ENCODE measurements at regions of chr1 and their contacts with region 1.

Region 1: DNA sequence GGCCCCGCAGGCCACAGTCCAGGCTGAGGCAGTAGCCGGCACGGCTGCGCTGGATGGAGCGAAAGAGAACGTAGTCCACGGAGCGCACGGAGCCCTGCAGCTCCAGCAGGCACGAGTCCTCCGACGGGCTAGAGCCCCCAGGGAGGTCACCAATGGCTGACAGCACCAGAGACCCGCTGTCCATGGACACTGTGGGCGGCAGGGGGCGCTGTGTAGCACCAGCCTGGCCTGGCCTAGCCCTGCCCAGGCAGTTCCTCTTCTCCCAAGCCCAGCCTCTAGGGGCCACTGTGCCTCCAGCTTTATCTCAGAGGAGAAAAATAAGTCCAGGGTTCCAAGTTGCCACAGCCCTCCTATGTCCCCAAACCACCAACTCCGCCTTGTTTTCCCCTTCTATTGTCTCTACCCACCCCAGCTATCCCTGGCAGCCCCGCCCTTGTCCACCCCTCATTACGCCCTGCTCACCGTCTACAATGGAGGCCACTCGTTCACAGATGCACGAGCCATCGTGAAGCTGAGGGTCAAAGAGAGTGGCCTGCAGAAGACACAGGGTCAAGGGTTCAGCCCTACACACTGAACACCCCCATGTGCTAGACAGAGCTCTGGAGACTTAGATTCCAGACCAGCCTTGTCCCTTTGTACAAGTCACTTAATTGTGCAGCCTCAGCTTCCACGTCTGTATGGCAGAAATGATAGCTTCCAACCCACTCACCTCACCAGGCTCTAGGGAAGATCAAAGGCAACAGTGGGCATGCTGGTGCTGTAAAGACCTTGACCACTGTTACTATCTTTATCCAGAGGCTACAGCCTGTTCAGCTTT is 4.4 kb downstream of the ENTREP3 start:
- DNase-seq: peak in 1 of 2 experiments; percentile 100
- H3K4me3 ChIP-seq: peak overlapping the region; percentile 11 to 64 (median 58)
- H3K27ac ChIP-seq: no peak overlapping the region; the same call in 1 of the 2 replicates
- H3K4me1 ChIP-seq: peaks cover 0 to 20% (median 13%) of the 10 kb centered on the region in 4 experiments; a peak in 6 of 7 replicates
- H3K27me3 ChIP-seq: peaks cover 0 to 8% (median 4%) of the 10 kb centered on the region in 4 experiments; a peak in 2 of 7 replicates
- CTCF ChIP-seq: peak; percentile 100
- EP300 ChIP-seq: no peak
- POLR2A ChIP-seq: no peak
- RAD21 ChIP-seq: peak; percentile 88 to 90

Region 2: GRCh38 chr1:155208541-155209311 is 42.1 kb before region 1 on chr1 and contains the start of gene MTX1:
- CTCF ChIA-PET with region 1: interaction called, 37 read pairs
- POLR2A ChIA-PET with region 1: interaction called, 20 read pairs
- DNase-seq: peak in 1 of 2 experiments; percentile 90
- H3K4me3 ChIP-seq: peak within 1 kb of the TSS; percentile 86 to 95 (median 94)
- H3K27ac ChIP-seq: peak within 1 kb of the TSS; percentile 85
- H3K4me1 ChIP-seq: peaks cover 3 to 20% (median 12%) of the 10 kb centered on the region in 4 experiments
- H3K27me3 ChIP-seq: peaks cover 0 to 3% (median 0%) of the 10 kb centered on the region in 4 experiments; a peak in 2 of 7 replicates
- CTCF ChIP-seq: no peak
- EP300 ChIP-seq: peak in 1 of 2 experiments; percentile 86; a peak in 1 of 3 replicates
- POLR2A ChIP-seq: peak in 1 of 2 experiments; percentile 74; a peak in 2 of 3 replicates
- RAD21 ChIP-seq: no peak
- total RNA-seq, gene MTX1: 47.9 and 55.0 TPM in 2 replicates

Region 3: GRCh38 chr1:155261852-155262673 is 11.2 kb after region 1 on chr1 and contains the start of gene SCAMP3:
- CTCF ChIA-PET with region 1: interaction called, 63 read pairs
- POLR2A ChIA-PET with region 1: interaction called, 48 read pairs
- DNase-seq: peak; percentile 90 to 95
- H3K4me3 ChIP-seq: peak within 1 kb of the TSS; percentile 71 to 89 (median 76)
- H3K27ac ChIP-seq: peak within 1 kb of the TSS; percentile 27; the same call in 1 of the 2 replicates
- H3K4me1 ChIP-seq: peaks cover 0 to 8% (median 4%) of the 10 kb centered on the region in 4 experiments; a peak in 3 of 7 replicates
- H3K27me3 ChIP-seq: no peaks in the 10 kb centered on the region
- CTCF ChIP-seq: no peak
- EP300 ChIP-seq: no peak
- POLR2A ChIP-seq: peak; percentile 59 to 94
- RAD21 ChIP-seq: no peak
- total RNA-seq, gene SCAMP3: 48.9 and 50.0 TPM in 2 replicates

Region 4: DNA sequence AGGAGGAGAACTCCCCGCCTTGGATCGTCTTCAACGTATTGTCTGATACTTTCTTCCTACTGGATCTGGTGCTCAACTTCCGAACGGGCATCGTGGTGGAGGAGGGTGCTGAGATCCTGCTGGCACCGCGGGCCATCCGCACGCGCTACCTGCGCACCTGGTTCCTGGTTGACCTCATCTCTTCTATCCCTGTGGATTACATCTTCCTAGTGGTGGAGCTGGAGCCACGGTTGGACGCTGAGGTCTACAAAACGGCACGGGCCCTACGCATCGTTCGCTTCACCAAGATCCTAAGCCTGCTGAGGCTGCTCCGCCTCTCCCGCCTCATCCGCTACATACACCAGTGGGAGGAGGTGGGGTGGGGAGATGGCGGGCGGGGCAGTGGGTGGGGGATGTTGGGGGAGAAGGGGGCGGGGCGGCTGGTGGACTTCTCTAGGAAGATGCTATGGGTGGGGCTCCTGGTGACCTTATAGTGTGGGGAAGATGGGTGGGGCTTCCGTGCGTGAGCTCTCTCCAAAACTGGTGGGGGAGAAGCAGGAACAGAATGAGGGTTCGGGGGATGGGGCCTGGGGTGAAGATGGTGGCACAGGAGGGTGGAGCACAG is 31.7 kb after region 1 on chr1:
- CTCF ChIA-PET with region 1: interaction called, 29 read pairs
- POLR2A ChIA-PET with region 1: interaction called, 5 read pairs
- DNase-seq: no peak
- H3K4me3 ChIP-seq: no peak overlapping the region
- H3K27ac ChIP-seq: no peak overlapping the region
- H3K4me1 ChIP-seq: peaks cover 9 to 10% (median 10%) of the 10 kb centered on the region in 4 experiments
- H3K27me3 ChIP-seq: no peaks in the 10 kb centered on the region
- CTCF ChIP-seq: no peak
- EP300 ChIP-seq: no peak
- POLR2A ChIP-seq: no peak
- RAD21 ChIP-seq: no peak

Region 5: GRCh38 chr1:155308493-155309422 is 57.9 kb after region 1 on chr1 and contains the start of gene FDPS:
- CTCF ChIA-PET with region 1: interaction called, 103 read pairs
- POLR2A ChIA-PET with region 1: interaction called, 6 read pairs
- DNase-seq: peak; percentile 89 to 97
- H3K4me3 ChIP-seq: peak within 1 kb of the TSS; percentile 79 to 100 (median 89)
- H3K27ac ChIP-seq: peak within 1 kb of the TSS; percentile 65
- H3K4me1 ChIP-seq: peaks cover 0 to 8% (median 4%) of the 10 kb centered on the region in 4 experiments; a peak in 6 of 7 replicates
- H3K27me3 ChIP-seq: no peaks in the 10 kb centered on the region; a peak in 1 of 7 replicates
- CTCF ChIP-seq: 0 out of 4 replicates have a peak, but pooled peaks of 1 of the 3 experiments have one; percentile 7
- EP300 ChIP-seq: no peak
- POLR2A ChIP-seq: peak; percentile 85 to 91
- RAD21 ChIP-seq: 0 out of 4 replicates have a peak, but pooled peaks of 1 of the 2 experiments have one; percentile 6
- total RNA-seq, gene FDPS: 368 and 370 TPM in 2 replicates

Measured in H1 (cell line).